ENCODE measurements at regions of chr11 and their contacts with region 1.

Region 1: DNA sequence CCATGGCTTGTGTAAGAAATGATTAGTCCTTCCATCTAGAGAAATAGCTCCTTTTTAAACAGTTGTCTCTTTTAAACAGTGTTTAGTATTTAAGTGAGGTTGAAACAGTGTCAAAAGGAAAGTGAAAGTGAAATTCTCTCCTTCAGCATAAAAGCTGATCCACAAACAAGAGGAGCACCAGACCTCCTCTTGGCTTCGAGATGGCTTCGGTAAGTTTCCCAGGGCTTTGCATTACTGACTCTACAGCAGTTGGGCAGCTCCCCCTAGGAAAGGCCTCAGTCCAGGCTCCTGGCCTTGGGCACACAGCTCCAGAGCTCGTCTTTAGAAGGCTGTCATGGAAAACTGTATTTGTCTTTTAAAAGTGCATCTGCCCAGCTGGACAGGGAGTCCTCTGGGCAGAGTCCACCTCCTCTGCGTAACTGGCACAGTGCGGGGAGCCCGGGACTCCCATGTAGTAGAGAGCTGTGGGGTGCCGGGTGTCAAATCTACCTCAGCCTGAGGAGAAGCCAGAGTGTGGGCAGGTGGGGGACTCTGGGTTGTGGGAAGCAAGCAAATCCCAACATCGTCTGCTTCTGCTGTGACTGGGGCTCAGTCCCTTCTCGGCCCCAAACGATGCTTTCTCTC is at the start of gene PLAAT4:
- DNase-seq: peak in 8 of 9 donors; percentile 30 to 64 (median 56)
- ATAC-seq: peak; percentile 74
- H3K4me3 ChIP-seq: peak within 1 kb of the TSS; percentile 90
- H3K4me3 Mint-ChIP-seq: peak within 1 kb of the TSS; percentile 87 to 99 (median 96)
- H3K27ac ChIP-seq: peak within 1 kb of the TSS; percentile 82
- H3K27ac Mint-ChIP-seq: peak within 1 kb of the TSS; percentile 91 to 97 (median 96)
- H3K4me1 ChIP-seq: peaks cover 79% of the 10 kb centered on the region in 2 donors
- H3K4me1 Mint-ChIP-seq: peaks cover 55 to 96% (median 87%) of the 10 kb centered on the region in 7 donors
- H3K27me3 ChIP-seq: no peaks in the 10 kb centered on the region
- H3K27me3 Mint-ChIP-seq: no peaks in the 10 kb centered on the region
- total RNA-seq, gene PLAAT4: 96.2 to 170 (median 122) TPM

Region 2: DNA sequence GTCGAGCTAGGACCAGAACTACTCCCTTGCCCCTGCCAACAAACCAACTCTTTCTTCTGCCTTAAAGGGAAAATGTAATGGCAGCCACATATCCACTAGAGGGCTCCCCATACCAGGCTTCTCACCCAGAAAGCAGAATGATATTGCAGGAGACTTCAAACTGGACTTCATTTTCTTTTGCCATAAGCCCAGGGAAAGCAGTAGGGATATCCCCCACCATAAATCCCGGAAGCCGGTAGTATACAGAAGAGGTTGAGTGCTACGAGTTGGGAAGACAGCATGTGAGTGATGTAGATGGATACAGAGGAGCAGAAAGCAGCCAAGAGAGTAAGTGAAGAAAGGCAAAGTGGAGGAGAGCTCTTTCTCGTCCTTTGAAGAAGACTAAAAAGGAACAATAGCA is 57.9 kb before region 1 on chr11:
- CTCF ChIA-PET with region 1: interaction called, 15 read pairs
- POLR2A ChIA-PET with region 1: interaction called, 8 read pairs
- intact Hi-C with region 1: loop called (anchors 1 to 2 kb)
- DNase-seq: peak; percentile 20 to 74 (median 65)
- ATAC-seq: peak; percentile 82
- H3K4me3 ChIP-seq: no peak overlapping the region
- H3K4me3 Mint-ChIP-seq: no peak overlapping the region
- H3K27ac ChIP-seq: no peak overlapping the region
- H3K27ac Mint-ChIP-seq: no peak overlapping the region
- H3K4me1 ChIP-seq: no peaks in the 10 kb centered on the region
- H3K4me1 Mint-ChIP-seq: no peaks in the 10 kb centered on the region
- H3K27me3 ChIP-seq: no peaks in the 10 kb centered on the region
- H3K27me3 Mint-ChIP-seq: peaks cover 0 to 43% (median 6%) of the 10 kb centered on the region in 5 donors

Region 3: GRCh38 chr11:63548178-63548577 is 11.4 kb after region 1 on chr11:
- CTCF ChIA-PET with region 1: interaction called, 25 read pairs
- POLR2A ChIA-PET with region 1: interaction called, 172 read pairs
- intact Hi-C with region 1: loop called (anchors 1 kb)
- DNase-seq: no peak
- ATAC-seq: no peak
- H3K4me3 ChIP-seq: no peak overlapping the region
- H3K4me3 Mint-ChIP-seq: peak overlapping the region in 2 of 10 donors; percentile 1 to 8
- H3K27ac ChIP-seq: no peak overlapping the region
- H3K27ac Mint-ChIP-seq: peak overlapping the region in 7 of 9 donors; percentile 22 to 78 (median 65)
- H3K4me1 ChIP-seq: peaks cover 16 to 19% of the 10 kb centered on the region in 2 donors
- H3K4me1 Mint-ChIP-seq: peaks cover 14 to 60% (median 48%) of the 10 kb centered on the region in 7 donors
- H3K27me3 ChIP-seq: no peaks in the 10 kb centered on the region
- H3K27me3 Mint-ChIP-seq: no peaks in the 10 kb centered on the region

Region 4: DNA sequence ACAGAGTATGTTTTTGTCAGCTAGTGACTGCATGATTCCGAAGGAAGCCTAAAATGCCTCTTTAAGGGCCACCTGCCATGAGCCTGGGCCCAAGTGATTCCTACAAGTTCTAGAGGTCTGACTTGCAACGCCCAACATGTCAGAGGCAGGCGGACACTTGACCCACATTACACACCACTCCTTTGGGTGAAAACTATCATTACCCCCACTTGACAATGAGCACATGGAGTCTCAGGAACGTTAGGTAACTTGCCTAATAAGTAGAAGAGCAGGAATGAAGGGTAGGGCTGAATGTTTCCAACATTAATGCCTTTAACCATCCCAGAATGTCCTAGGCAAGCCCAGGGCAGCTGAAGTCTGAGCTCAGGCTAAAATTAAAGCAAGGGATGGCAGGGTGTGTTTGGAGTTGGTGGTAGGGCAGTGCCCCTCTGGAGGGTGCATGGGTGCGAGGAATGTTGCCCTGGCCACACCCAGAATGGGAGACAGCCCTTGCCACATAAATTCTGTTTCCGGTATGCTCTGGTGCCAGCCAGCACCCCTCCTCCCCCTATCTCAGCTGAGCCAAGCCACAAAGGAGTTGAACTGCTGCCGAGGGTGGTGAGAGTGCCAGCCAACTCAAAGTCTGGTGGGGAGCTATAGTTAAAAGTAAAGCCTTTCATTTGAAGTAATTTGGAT is 23.9 kb after region 1 on chr11:
- CTCF ChIA-PET with region 1: interaction called, 6 read pairs
- POLR2A ChIA-PET with region 1: interaction called, 15 read pairs
- intact Hi-C with region 1: loop called in 1 of 2 experiments (anchors 2 kb)
- DNase-seq: peak in 7 of 9 donors; percentile 45 to 61 (median 51)
- ATAC-seq: peak; percentile 80
- H3K4me3 ChIP-seq: no peak overlapping the region
- H3K4me3 Mint-ChIP-seq: peak overlapping the region in 9 of 10 donors; percentile 66 to 80 (median 79)
- H3K27ac ChIP-seq: peak overlapping the region; percentile 56
- H3K27ac Mint-ChIP-seq: peak overlapping the region; percentile 16 to 95 (median 85)
- H3K4me1 ChIP-seq: peaks cover 24 to 44% of the 10 kb centered on the region in 2 donors
- H3K4me1 Mint-ChIP-seq: peaks cover 38 to 85% (median 70%) of the 10 kb centered on the region in 7 donors
- H3K27me3 ChIP-seq: no peaks in the 10 kb centered on the region
- H3K27me3 Mint-ChIP-seq: no peaks in the 10 kb centered on the region

Region 5: DNA sequence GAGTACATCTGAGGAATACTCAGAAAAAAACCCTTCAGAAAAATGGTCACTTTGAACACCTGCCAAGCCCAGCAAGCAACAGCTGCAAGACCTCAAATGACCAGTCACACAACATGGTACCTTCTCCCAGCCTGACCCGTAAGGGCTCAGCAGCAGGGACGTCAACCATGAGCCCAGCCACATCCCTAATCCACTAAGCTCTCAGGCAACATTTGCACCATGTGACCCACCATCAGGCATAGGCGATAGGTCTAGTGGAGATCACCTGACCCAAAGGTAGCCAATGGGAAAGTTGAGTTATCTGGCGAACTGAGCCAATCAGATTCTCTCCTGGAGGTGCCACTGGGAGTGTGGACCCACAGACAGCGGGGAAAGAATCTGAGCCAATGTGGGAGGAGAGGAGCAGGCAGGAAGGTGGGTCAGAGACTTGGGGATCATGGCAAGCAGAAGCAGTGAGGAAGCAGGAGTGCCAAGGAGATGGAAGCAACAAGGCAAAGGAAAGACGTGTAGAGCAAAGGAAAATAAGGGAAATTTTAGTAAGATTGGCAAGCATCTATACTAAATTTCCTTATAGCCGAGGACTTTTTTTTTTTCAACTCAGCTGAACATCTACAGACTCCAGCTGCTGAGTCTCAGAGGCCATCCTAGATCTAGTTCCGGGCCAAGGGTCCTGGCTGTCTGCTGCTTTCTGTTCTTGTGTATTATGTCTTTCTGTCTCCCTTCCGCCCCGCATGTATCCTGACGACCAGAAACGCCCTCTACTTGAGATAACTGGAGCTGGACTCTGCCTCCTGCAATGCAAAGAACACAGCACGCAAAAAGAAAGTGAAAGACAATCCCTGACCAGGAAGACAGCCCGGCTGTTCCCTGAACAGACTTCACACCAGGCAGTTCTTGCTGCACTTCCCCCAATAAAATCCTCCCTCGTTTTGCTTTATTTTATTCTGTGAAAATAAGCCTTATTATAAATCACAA is 37.4 kb after region 1 on chr11:
- CTCF ChIA-PET with region 1: interaction called, 9 read pairs
- POLR2A ChIA-PET with region 1: interaction called, 23 read pairs
- intact Hi-C with region 1: loop called (anchors 1 to 2 kb)
- DNase-seq: peak in 4 of 9 donors; percentile 30 to 41 (median 35)
- ATAC-seq: peak; percentile 82
- H3K4me3 ChIP-seq: peak overlapping the region; percentile 43
- H3K4me3 Mint-ChIP-seq: peak overlapping the region; percentile 77 to 95 (median 88)
- H3K27ac ChIP-seq: peak overlapping the region; percentile 33
- H3K27ac Mint-ChIP-seq: peak overlapping the region; percentile 81 to 99 (median 93)
- H3K4me1 ChIP-seq: peaks cover 12 to 13% of the 10 kb centered on the region in 2 donors
- H3K4me1 Mint-ChIP-seq: peaks cover 18 to 40% (median 30%) of the 10 kb centered on the region in 7 donors
- H3K27me3 ChIP-seq: no peaks in the 10 kb centered on the region
- H3K27me3 Mint-ChIP-seq: peaks cover 0 to 19% (median 0%) of the 10 kb centered on the region in 5 donors

Region 6: DNA sequence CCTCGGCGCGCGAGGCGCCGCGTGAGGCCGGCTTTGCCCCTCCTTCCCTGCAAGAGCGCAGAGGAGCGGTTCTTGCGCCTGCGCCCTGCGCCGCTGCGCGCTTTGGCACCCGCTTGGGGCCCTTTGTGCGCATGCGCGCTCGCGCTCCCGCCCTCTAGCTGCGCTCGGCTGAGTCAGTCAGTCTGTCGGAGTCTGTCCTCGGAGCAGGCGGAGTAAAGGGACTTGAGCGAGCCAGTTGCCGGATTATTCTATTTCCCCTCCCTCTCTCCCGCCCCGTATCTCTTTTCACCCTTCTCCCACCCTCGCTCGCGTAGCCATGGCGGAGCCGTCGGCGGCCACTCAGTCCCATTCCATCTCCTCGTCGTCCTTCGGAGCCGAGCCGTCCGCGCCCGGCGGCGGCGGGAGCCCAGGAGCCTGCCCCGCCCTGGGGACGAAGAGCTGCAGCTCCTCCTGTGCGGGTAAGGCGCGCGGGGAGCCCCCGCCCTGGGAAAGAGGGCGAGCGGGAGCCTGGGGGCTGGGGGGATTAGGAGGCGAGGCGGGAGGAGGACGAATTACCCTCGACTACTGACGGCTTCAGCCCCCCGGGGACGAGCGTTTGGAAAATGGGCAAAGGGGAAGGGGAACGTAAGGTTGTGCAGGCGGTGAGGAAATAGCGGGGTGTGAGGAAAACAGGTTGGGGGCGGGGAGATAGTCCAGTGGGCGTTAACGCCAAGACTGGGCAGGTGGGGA is 144.7 kb after region 1 on chr11 and contains the start of gene RTN3:
- CTCF ChIA-PET with region 1: no interaction called
- POLR2A ChIA-PET with region 1: interaction called, 5 read pairs
- intact Hi-C with region 1: loop called (anchors 5 kb)
- DNase-seq: peak; percentile 97 to 99 (median 98)
- ATAC-seq: peak; percentile 95
- H3K4me3 ChIP-seq: peak within 1 kb of the TSS; percentile 86
- H3K4me3 Mint-ChIP-seq: peak within 1 kb of the TSS; percentile 89 to 97 (median 94)
- H3K27ac ChIP-seq: peak within 1 kb of the TSS; percentile 69
- H3K27ac Mint-ChIP-seq: peak within 1 kb of the TSS; percentile 50 to 97 (median 83)
- H3K4me1 ChIP-seq: peaks cover 6 to 17% of the 10 kb centered on the region in 2 donors
- H3K4me1 Mint-ChIP-seq: peaks cover 20 to 30% (median 27%) of the 10 kb centered on the region in 7 donors
- H3K27me3 ChIP-seq: no peaks in the 10 kb centered on the region
- H3K27me3 Mint-ChIP-seq: peaks cover 0 to 12% (median 0%) of the 10 kb centered on the region in 5 donors
- total RNA-seq, gene RTN3: 20.8 to 65.7 (median 34.4) TPM

Measured in naive thymus-derived CD4-positive, alpha-beta T cell (primary cell).